ENCODE measurements at regions of chr18 and their contacts with region 1.

Region 1: GRCh38 chr18:44679056-44679905 is 1.4 kb upstream of the SETBP1 start:
- DNase-seq: peak; percentile 88
- ATAC-seq: peak; percentile 94
- H3K4me3 Mint-ChIP-seq: no peak overlapping the region
- H3K27ac Mint-ChIP-seq: no peak overlapping the region
- H3K4me1 Mint-ChIP-seq: peaks cover 7% of the 10 kb centered on the region
- H3K27me3 Mint-ChIP-seq: peaks cover 38% of the 10 kb centered on the region

Region 2: GRCh38 chr18:44758861-44759631 is 79.8 kb after region 1 on chr18:
- CTCF ChIA-PET with region 1: interaction called, 3 read pairs
- POLR2A ChIA-PET with region 1: interaction called, 5 read pairs
- intact Hi-C with region 1: loop called (anchors 1 kb)
- DNase-seq: peak; percentile 79
- ATAC-seq: peak; percentile 91
- H3K4me3 Mint-ChIP-seq: peak overlapping the region; percentile 35
- H3K27ac Mint-ChIP-seq: peak overlapping the region; percentile 93
- H3K4me1 Mint-ChIP-seq: peaks cover 27% of the 10 kb centered on the region
- H3K27me3 Mint-ChIP-seq: peaks cover 10% of the 10 kb centered on the region

Region 3: GRCh38 chr18:44826418-44827259 is 147.4 kb after region 1 on chr18:
- CTCF ChIA-PET with region 1: no interaction called
- POLR2A ChIA-PET with region 1: no interaction called
- intact Hi-C with region 1: loop called (anchors 1 to 10 kb)
- DNase-seq: no peak
- ATAC-seq: no peak
- H3K4me3 Mint-ChIP-seq: no peak overlapping the region
- H3K27ac Mint-ChIP-seq: no peak overlapping the region
- H3K4me1 Mint-ChIP-seq: peaks cover 10% of the 10 kb centered on the region
- H3K27me3 Mint-ChIP-seq: peaks cover 15% of the 10 kb centered on the region

Region 4: GRCh38 chr18:44895176-44895798 is 216.0 kb after region 1 on chr18:
- CTCF ChIA-PET with region 1: no interaction called
- POLR2A ChIA-PET with region 1: no interaction called
- intact Hi-C with region 1: loop called (anchors 1 to 2 kb)
- DNase-seq: peak; percentile 62
- ATAC-seq: peak; percentile 45
- H3K4me3 Mint-ChIP-seq: no peak overlapping the region
- H3K27ac Mint-ChIP-seq: peak overlapping the region; percentile 27
- H3K4me1 Mint-ChIP-seq: peaks cover 51% of the 10 kb centered on the region
- H3K27me3 Mint-ChIP-seq: peaks cover 2% of the 10 kb centered on the region

Region 5: GRCh38 chr18:45212181-45213039 is 533.1 kb after region 1 on chr18:
- CTCF ChIA-PET with region 1: no interaction called
- POLR2A ChIA-PET with region 1: no interaction called
- intact Hi-C with region 1: loop called (anchors 2 to 5 kb)
- DNase-seq: peak; percentile 89
- ATAC-seq: peak; percentile 94
- H3K4me3 Mint-ChIP-seq: no peak overlapping the region
- H3K27ac Mint-ChIP-seq: no peak overlapping the region
- H3K4me1 Mint-ChIP-seq: no peaks in the 10 kb centered on the region
- H3K27me3 Mint-ChIP-seq: peaks cover 8% of the 10 kb centered on the region